ENCODE measurements at regions of chr6 and their contacts with region 1.

Region 1: DNA sequence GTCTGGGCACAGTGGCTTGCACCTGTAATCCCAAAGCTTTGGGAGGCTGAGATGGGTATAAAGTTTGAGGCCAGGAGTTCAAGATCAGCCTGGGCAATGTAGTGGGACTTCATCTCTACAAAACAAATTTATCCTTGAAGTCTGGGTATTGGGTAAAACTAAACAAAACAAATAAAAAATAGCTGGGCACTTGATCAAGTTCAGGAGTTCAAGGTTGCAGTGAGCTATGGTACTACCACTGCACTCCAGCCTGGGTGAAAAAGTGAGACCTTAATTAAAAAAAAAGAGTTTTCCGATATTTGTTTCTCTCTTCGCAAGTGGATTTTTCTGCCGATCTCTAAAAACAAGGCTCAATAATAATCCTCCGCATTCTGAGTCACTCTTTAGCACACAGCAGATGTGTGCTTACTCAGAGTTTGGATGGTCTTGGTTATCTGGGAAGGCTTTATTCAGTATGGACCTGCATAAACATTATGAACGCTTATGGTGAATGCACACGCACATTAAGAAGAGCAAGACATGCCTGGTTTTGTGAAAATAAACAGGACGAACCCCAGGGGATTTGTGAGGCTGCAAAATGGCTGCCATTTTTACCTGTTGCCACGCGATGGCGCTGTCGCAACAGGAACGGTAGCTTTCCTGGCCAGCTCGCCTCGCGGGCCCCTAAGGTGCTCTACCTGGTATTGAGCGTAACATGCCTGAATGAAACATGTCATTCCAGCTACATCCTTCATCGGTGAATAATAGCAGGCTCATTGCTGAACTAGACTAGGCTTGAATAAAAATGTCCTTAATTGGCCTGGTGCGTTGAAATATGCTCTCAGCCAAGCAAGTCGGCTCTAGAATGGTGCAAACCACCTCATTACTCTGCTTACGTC is 6.0 kb downstream of the OPN5 start:
- DNase-seq: peak in 32 of 35 experiments; percentile 18 to 64 (median 39)
- ATAC-seq: peak; percentile 52 to 77 (median 64)
- H3K4me3 ChIP-seq: no peak overlapping the region
- H3K4me3 Mint-ChIP-seq: no peak overlapping the region
- H3K27ac ChIP-seq: no peak overlapping the region
- H3K27ac Mint-ChIP-seq: no peak overlapping the region
- H3K4me1 ChIP-seq: peaks cover 0 to 3% of the 10 kb centered on the region in 2 experiments
- H3K4me1 Mint-ChIP-seq: peaks cover 3 to 6% (median 6%) of the 10 kb centered on the region in 3 donors
- H3K27me3 ChIP-seq: peaks cover 2 to 6% of the 10 kb centered on the region in 2 experiments
- H3K27me3 Mint-ChIP-seq: peaks cover 24 to 41% of the 10 kb centered on the region in 2 donors

Region 2: GRCh38 chr6:47083586-47084047 is 704.2 kb before region 1 on chr6:
- CTCF ChIA-PET with region 1: no interaction called
- POLR2A ChIA-PET with region 1: no interaction called
- DNase-seq: no peak
- ATAC-seq: no peak
- H3K4me3 ChIP-seq: no peak overlapping the region
- H3K4me3 Mint-ChIP-seq: no peak overlapping the region
- H3K27ac ChIP-seq: no peak overlapping the region
- H3K27ac Mint-ChIP-seq: no peak overlapping the region
- H3K4me1 ChIP-seq: no peaks in the 10 kb centered on the region
- H3K4me1 Mint-ChIP-seq: no peaks in the 10 kb centered on the region
- H3K27me3 ChIP-seq: peaks cover 0 to 3% of the 10 kb centered on the region in 2 experiments
- H3K27me3 Mint-ChIP-seq: peaks cover 2 to 5% of the 10 kb centered on the region in 2 donors

Region 3: GRCh38 chr6:47631269-47631772 is 156.5 kb before region 1 on chr6:
- CTCF ChIA-PET with region 1: interaction called in 1 of 2 experiments, 34 read pairs
- POLR2A ChIA-PET with region 1: no interaction called
- DNase-seq: peak in 7 of 35 experiments; percentile 1 to 53 (median 6)
- ATAC-seq: peak; percentile 22 to 52 (median 40)
- H3K4me3 ChIP-seq: no peak overlapping the region
- H3K4me3 Mint-ChIP-seq: no peak overlapping the region
- H3K27ac ChIP-seq: no peak overlapping the region
- H3K27ac Mint-ChIP-seq: peak overlapping the region in 1 of 2 donors; percentile 53
- H3K4me1 ChIP-seq: peaks cover 6 to 8% of the 10 kb centered on the region in 2 experiments
- H3K4me1 Mint-ChIP-seq: peaks cover 17 to 24% (median 21%) of the 10 kb centered on the region in 3 donors
- H3K27me3 ChIP-seq: no peaks in the 10 kb centered on the region
- H3K27me3 Mint-ChIP-seq: no peaks in the 10 kb centered on the region

Region 4: GRCh38 chr6:47669684-47670513 is 118.0 kb before region 1 on chr6:
- CTCF ChIA-PET with region 1: no interaction called
- POLR2A ChIA-PET with region 1: no interaction called
- DNase-seq: no peak
- ATAC-seq: no peak
- H3K4me3 ChIP-seq: no peak overlapping the region
- H3K4me3 Mint-ChIP-seq: no peak overlapping the region
- H3K27ac ChIP-seq: no peak overlapping the region
- H3K27ac Mint-ChIP-seq: no peak overlapping the region
- H3K4me1 ChIP-seq: no peaks in the 10 kb centered on the region
- H3K4me1 Mint-ChIP-seq: no peaks in the 10 kb centered on the region
- H3K27me3 ChIP-seq: no peaks in the 10 kb centered on the region
- H3K27me3 Mint-ChIP-seq: peaks cover 35 to 50% of the 10 kb centered on the region in 2 donors

Region 5: GRCh38 chr6:47804821-47805220 is 17.0 kb after region 1 on chr6:
- CTCF ChIA-PET with region 1: interaction called, 3 to 12 read pairs
- POLR2A ChIA-PET with region 1: no interaction called
- DNase-seq: no peak
- ATAC-seq: no peak
- H3K4me3 ChIP-seq: no peak overlapping the region
- H3K4me3 Mint-ChIP-seq: no peak overlapping the region
- H3K27ac ChIP-seq: no peak overlapping the region
- H3K27ac Mint-ChIP-seq: no peak overlapping the region
- H3K4me1 ChIP-seq: no peaks in the 10 kb centered on the region
- H3K4me1 Mint-ChIP-seq: no peaks in the 10 kb centered on the region
- H3K27me3 ChIP-seq: no peaks in the 10 kb centered on the region
- H3K27me3 Mint-ChIP-seq: peaks cover 25 to 39% of the 10 kb centered on the region in 2 donors

Region 6: DNA sequence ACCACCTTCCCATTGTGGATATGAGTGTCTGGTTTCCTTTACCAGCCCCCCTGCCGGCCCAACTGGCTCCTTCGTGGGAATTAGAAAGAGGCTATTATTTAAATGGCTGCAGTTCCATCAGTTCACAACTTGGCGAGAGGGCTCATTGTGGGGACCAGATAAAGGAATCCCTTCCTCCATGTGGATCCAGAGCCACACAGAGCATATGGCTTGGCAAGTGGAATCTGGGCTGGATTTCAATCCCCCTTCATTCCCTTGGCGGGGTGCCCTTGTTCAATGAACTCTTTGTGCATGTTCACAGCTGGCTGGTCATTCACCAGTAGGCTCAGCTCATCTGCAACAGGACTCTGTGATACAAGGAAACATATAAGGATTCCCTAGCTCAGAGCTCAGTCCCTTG is 134.5 kb after region 1 on chr6:
- CTCF ChIA-PET with region 1: no interaction called
- POLR2A ChIA-PET with region 1: no interaction called
- DNase-seq: no peak
- ATAC-seq: no peak
- H3K4me3 ChIP-seq: no peak overlapping the region
- H3K4me3 Mint-ChIP-seq: no peak overlapping the region
- H3K27ac ChIP-seq: no peak overlapping the region
- H3K27ac Mint-ChIP-seq: no peak overlapping the region
- H3K4me1 ChIP-seq: no peaks in the 10 kb centered on the region
- H3K4me1 Mint-ChIP-seq: no peaks in the 10 kb centered on the region
- H3K27me3 ChIP-seq: no peaks in the 10 kb centered on the region
- H3K27me3 Mint-ChIP-seq: no peaks in the 10 kb centered on the region

Region 7: GRCh38 chr6:49409951-49410542 is 1622.2 kb after region 1 on chr6:
- CTCF ChIA-PET with region 1: interaction called in 1 of 2 experiments, 13 read pairs
- POLR2A ChIA-PET with region 1: no interaction called
- DNase-seq: peak in 32 of 35 experiments; percentile 2 to 67 (median 31)
- ATAC-seq: peak in 2 of 4 experiments; percentile 33 to 57
- H3K4me3 ChIP-seq: no peak overlapping the region
- H3K4me3 Mint-ChIP-seq: no peak overlapping the region
- H3K27ac ChIP-seq: no peak overlapping the region
- H3K27ac Mint-ChIP-seq: no peak overlapping the region
- H3K4me1 ChIP-seq: no peaks in the 10 kb centered on the region
- H3K4me1 Mint-ChIP-seq: no peaks in the 10 kb centered on the region
- H3K27me3 ChIP-seq: no peaks in the 10 kb centered on the region
- H3K27me3 Mint-ChIP-seq: peaks cover 11% of the 10 kb centered on the region in 2 donors